Dendritic cell treated with granulocyte-macrophage colony-stimulating factor and Interleukin-4, amounts not matched to agents 40 ng/mL and 50 ng/mL, for 4 days (primary cell): ENCODE measurements at regions of chr6 and their contacts with region 1.

Region 1: GRCh38 chr6:44080561-44081521 is 46.4 kb downstream of the MRPL14 start:
- H3K4me3 Mint-ChIP-seq: no peak overlapping the region
- H3K27ac Mint-ChIP-seq: no peak overlapping the region
- H3K4me1 Mint-ChIP-seq: peaks cover 21% of the 10 kb centered on the region
- H3K27me3 Mint-ChIP-seq: peaks cover 37% of the 10 kb centered on the region

Region 2: GRCh38 chr6:43608310-43608763 is 472.5 kb before region 1 on chr6:
- intact Hi-C with region 1: loop called (anchors 2 kb)
- H3K4me3 Mint-ChIP-seq: no peak overlapping the region
- H3K27ac Mint-ChIP-seq: peak overlapping the region; percentile 30
- H3K4me1 Mint-ChIP-seq: peaks cover 16% of the 10 kb centered on the region
- H3K27me3 Mint-ChIP-seq: no peaks in the 10 kb centered on the region

Region 3: GRCh38 chr6:44456070-44456965 is 375.5 kb after region 1 on chr6:
- intact Hi-C with region 1: no loop called
- H3K4me3 Mint-ChIP-seq: no peak overlapping the region
- H3K27ac Mint-ChIP-seq: no peak overlapping the region
- H3K4me1 Mint-ChIP-seq: peaks cover 12% of the 10 kb centered on the region
- H3K27me3 Mint-ChIP-seq: peaks cover 5% of the 10 kb centered on the region